Panc1 (cell line): ENCODE measurements at regions of chr1 and their contacts with region 1.

Region 1: GRCh38 chr1:237634923-237635322 is 255.8 kb downstream of the ZP4 start:
- DNase-seq: no peak
- ATAC-seq: no peak
- H3K4me3 ChIP-seq: no peak overlapping the region
- H3K27ac ChIP-seq: no peak overlapping the region
- H3K4me1 ChIP-seq: no peaks in the 10 kb centered on the region
- H3K27me3 ChIP-seq: no peaks in the 10 kb centered on the region
- CTCF ChIP-seq: no peak

Region 2: GRCh38 chr1:237713916-237714315 is 79.0 kb after region 1 on chr1:
- CTCF ChIA-PET with region 1: no interaction called
- POLR2A ChIA-PET with region 1: interaction called, 10 read pairs
- in situ Hi-C with region 1: no loop called
- intact Hi-C with region 1: no loop called
- DNase-seq: no peak
- ATAC-seq: no peak
- H3K4me3 ChIP-seq: no peak overlapping the region
- H3K27ac ChIP-seq: no peak overlapping the region
- H3K4me1 ChIP-seq: no peaks in the 10 kb centered on the region
- H3K27me3 ChIP-seq: no peaks in the 10 kb centered on the region
- CTCF ChIP-seq: no peak